ENCODE measurements at regions of chr5 and their contacts with region 1.

Region 1: DNA sequence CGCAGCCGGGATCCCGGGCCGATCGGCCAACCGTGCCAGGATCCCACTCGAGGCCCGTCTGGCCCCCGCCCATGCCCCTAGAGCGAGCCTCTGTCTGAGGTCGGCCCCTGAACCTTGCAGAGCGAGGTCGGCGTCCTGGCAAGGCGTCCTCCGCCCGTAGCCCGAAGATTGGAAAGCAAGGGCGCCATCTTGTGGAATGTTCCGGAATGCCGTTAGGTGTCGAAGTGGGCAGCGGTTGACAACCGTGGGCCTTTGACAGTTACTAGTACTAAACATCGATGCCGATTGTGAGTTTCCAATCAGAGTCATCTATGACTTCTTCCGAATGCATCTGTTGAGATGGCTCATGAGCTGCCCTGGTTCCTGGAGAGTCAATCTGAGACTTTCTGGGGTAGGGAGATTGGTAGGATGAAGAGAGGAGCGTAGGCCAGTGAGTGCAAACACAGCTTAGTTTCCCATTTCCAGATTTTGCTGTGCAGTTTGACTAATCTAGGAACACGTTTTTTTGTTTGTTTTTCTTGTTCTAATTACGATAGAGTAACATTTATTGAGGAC is 923 bp upstream of the PLK2 start:
- DNase-seq: peak; percentile 76 to 95 (median 88)
- ATAC-seq: peak; percentile 79
- H3K4me3 ChIP-seq: peak overlapping the region; percentile 66
- H3K4me3 Mint-ChIP-seq: peak overlapping the region; percentile 86 to 96 (median 91)
- H3K27ac ChIP-seq: peak overlapping the region; percentile 84
- H3K27ac Mint-ChIP-seq: peak overlapping the region; percentile 20 to 90 (median 79)
- H3K4me1 ChIP-seq: peaks cover 0 to 9% of the 10 kb centered on the region in 2 donors
- H3K4me1 Mint-ChIP-seq: peaks cover 9 to 26% (median 16%) of the 10 kb centered on the region in 7 donors
- H3K27me3 ChIP-seq: no peaks in the 10 kb centered on the region
- H3K27me3 Mint-ChIP-seq: peaks cover 4 to 22% (median 14%) of the 10 kb centered on the region in 5 donors

Region 2: GRCh38 chr5:56951946-56952691 is 1508.7 kb before region 1 on chr5 and contains the start of gene MIER3:
- CTCF ChIA-PET with region 1: no interaction called
- POLR2A ChIA-PET with region 1: no interaction called
- intact Hi-C with region 1: loop called in 1 of 2 experiments (anchors 1 kb)
- DNase-seq: peak; percentile 66 to 87 (median 80)
- ATAC-seq: peak; percentile 94
- H3K4me3 ChIP-seq: peak within 1 kb of the TSS; percentile 75
- H3K4me3 Mint-ChIP-seq: peak within 1 kb of the TSS; percentile 89 to 98 (median 96)
- H3K27ac ChIP-seq: peak within 1 kb of the TSS; percentile 73
- H3K27ac Mint-ChIP-seq: peak within 1 kb of the TSS in 8 of 9 donors; percentile 84 to 95 (median 88)
- H3K4me1 ChIP-seq: peaks cover 6 to 10% of the 10 kb centered on the region in 2 donors
- H3K4me1 Mint-ChIP-seq: peaks cover 18 to 32% (median 22%) of the 10 kb centered on the region in 7 donors
- H3K27me3 ChIP-seq: peaks cover 0 to 5% of the 10 kb centered on the region in 2 donors
- H3K27me3 Mint-ChIP-seq: peaks cover 10 to 45% (median 24%) of the 10 kb centered on the region in 5 donors
- total RNA-seq, gene MIER3: 14.9 to 35.0 (median 26.2) TPM

Region 3: GRCh38 chr5:57383093-57383861 is 1077.5 kb before region 1 on chr5:
- CTCF ChIA-PET with region 1: no interaction called
- POLR2A ChIA-PET with region 1: no interaction called
- intact Hi-C with region 1: loop called in 1 of 2 experiments (anchors 5 kb)
- DNase-seq: peak in 1 of 9 donors; percentile 35
- ATAC-seq: peak; percentile 31
- H3K4me3 ChIP-seq: no peak overlapping the region
- H3K4me3 Mint-ChIP-seq: peak overlapping the region in 1 of 10 donors; percentile 5
- H3K27ac ChIP-seq: no peak overlapping the region
- H3K27ac Mint-ChIP-seq: peak overlapping the region in 1 of 9 donors; percentile 46
- H3K4me1 ChIP-seq: no peaks in the 10 kb centered on the region
- H3K4me1 Mint-ChIP-seq: peaks cover 2 to 12% (median 8%) of the 10 kb centered on the region in 7 donors
- H3K27me3 ChIP-seq: no peaks in the 10 kb centered on the region
- H3K27me3 Mint-ChIP-seq: peaks cover 0 to 3% (median 0%) of the 10 kb centered on the region in 5 donors

Region 4: DNA sequence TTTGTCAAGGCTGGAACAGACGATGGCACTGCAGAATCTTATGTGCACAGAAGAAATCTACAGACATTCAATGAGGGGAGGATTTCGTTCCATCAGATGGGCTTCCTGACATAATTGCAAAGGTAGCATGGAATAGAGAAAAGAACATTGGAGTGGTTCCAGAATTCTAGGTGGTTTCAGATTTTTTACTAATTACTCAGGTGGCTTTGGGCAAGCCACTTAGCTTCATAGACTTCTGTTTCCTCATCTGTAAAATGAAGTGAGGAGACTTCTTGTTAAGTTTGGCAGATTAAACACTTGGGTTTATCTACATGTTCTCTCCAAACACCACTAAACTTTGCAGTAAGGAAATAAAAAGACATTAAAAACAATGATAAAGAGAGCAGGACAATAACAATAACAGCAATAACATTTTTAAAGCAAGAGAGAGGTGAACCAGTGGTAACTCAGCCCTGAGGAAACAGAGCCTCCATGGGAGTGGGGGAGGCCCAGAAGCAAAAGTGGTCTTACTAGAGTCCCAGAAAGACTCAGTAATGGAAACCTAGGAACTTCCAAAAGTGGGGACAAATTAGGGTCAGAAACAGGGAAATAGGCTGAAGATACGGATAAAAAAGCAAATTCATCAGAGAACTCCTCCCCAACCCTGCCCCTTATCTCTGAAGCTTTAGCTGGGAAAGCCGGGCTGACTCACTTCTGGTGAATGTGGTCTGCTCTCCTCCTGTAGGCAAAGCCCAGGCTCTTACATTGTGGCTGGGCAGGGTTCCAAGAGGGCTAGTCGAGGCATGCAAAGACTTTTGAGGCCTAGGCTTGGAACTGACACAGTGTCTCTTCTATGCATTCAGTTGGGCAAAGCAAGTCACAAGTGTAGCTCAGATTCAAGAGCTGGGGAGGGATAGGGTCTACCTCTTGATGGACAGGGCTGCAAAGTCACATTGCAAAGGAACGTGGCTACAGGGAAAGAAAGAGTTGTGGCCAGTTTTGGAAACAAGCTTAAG is 966.4 kb before region 1 on chr5:
- CTCF ChIA-PET with region 1: interaction called, 28 read pairs
- POLR2A ChIA-PET with region 1: interaction called, 31 read pairs
- intact Hi-C with region 1: loop called (anchors 1 kb)
- DNase-seq: peak in 1 of 9 donors; percentile 28
- ATAC-seq: no peak
- H3K4me3 ChIP-seq: no peak overlapping the region
- H3K4me3 Mint-ChIP-seq: peak overlapping the region in 9 of 10 donors; percentile 41 to 79 (median 69)
- H3K27ac ChIP-seq: peak overlapping the region; percentile 50
- H3K27ac Mint-ChIP-seq: peak overlapping the region; percentile 80 to 96 (median 93)
- H3K4me1 ChIP-seq: peaks cover 0 to 26% of the 10 kb centered on the region in 2 donors
- H3K4me1 Mint-ChIP-seq: peaks cover 28 to 58% (median 45%) of the 10 kb centered on the region in 7 donors
- H3K27me3 ChIP-seq: no peaks in the 10 kb centered on the region
- H3K27me3 Mint-ChIP-seq: no peaks in the 10 kb centered on the region

Region 5: GRCh38 chr5:57779383-57780223 is 681.2 kb before region 1 on chr5:
- CTCF ChIA-PET with region 1: interaction called, 20 read pairs
- POLR2A ChIA-PET with region 1: interaction called, 7 read pairs
- intact Hi-C with region 1: loop called (anchors 1 kb)
- DNase-seq: peak in 5 of 9 donors; percentile 8 to 26 (median 18)
- ATAC-seq: peak; percentile 58
- H3K4me3 ChIP-seq: no peak overlapping the region
- H3K4me3 Mint-ChIP-seq: no peak overlapping the region
- H3K27ac ChIP-seq: no peak overlapping the region
- H3K27ac Mint-ChIP-seq: no peak overlapping the region
- H3K4me1 ChIP-seq: no peaks in the 10 kb centered on the region
- H3K4me1 Mint-ChIP-seq: no peaks in the 10 kb centered on the region
- H3K27me3 ChIP-seq: no peaks in the 10 kb centered on the region
- H3K27me3 Mint-ChIP-seq: peaks cover 0 to 4% (median 0%) of the 10 kb centered on the region in 5 donors

Region 6: GRCh38 chr5:58322453-58322852 is 138.4 kb before region 1 on chr5:
- CTCF ChIA-PET with region 1: no interaction called
- POLR2A ChIA-PET with region 1: no interaction called
- intact Hi-C with region 1: no loop called
- DNase-seq: no peak
- ATAC-seq: no peak
- H3K4me3 ChIP-seq: no peak overlapping the region
- H3K4me3 Mint-ChIP-seq: no peak overlapping the region
- H3K27ac ChIP-seq: no peak overlapping the region
- H3K27ac Mint-ChIP-seq: no peak overlapping the region
- H3K4me1 ChIP-seq: no peaks in the 10 kb centered on the region
- H3K4me1 Mint-ChIP-seq: peaks cover 0 to 2% (median 0%) of the 10 kb centered on the region in 7 donors
- H3K27me3 ChIP-seq: no peaks in the 10 kb centered on the region
- H3K27me3 Mint-ChIP-seq: peaks cover 2 to 23% (median 12%) of the 10 kb centered on the region in 5 donors

Region 7: GRCh38 chr5:59126708-59127573 is 666.1 kb after region 1 on chr5:
- CTCF ChIA-PET with region 1: no interaction called
- POLR2A ChIA-PET with region 1: no interaction called
- intact Hi-C with region 1: loop called in 1 of 2 experiments (anchors 10 kb)
- DNase-seq: peak in 1 of 9 donors; percentile 17
- ATAC-seq: peak; percentile 9
- H3K4me3 ChIP-seq: peak overlapping the region; percentile 46
- H3K4me3 Mint-ChIP-seq: no peak overlapping the region
- H3K27ac ChIP-seq: peak overlapping the region; percentile 84
- H3K27ac Mint-ChIP-seq: no peak overlapping the region
- H3K4me1 ChIP-seq: peaks cover 58 to 59% of the 10 kb centered on the region in 2 donors
- H3K4me1 Mint-ChIP-seq: peaks cover 0 to 20% (median 7%) of the 10 kb centered on the region in 7 donors
- H3K27me3 ChIP-seq: no peaks in the 10 kb centered on the region
- H3K27me3 Mint-ChIP-seq: no peaks in the 10 kb centered on the region

Measured in naive thymus-derived CD4-positive, alpha-beta T cell (primary cell).